AG04449 (cell line): ENCODE measurements at regions of chr7 and their contacts with region 1.

Region 1: DNA sequence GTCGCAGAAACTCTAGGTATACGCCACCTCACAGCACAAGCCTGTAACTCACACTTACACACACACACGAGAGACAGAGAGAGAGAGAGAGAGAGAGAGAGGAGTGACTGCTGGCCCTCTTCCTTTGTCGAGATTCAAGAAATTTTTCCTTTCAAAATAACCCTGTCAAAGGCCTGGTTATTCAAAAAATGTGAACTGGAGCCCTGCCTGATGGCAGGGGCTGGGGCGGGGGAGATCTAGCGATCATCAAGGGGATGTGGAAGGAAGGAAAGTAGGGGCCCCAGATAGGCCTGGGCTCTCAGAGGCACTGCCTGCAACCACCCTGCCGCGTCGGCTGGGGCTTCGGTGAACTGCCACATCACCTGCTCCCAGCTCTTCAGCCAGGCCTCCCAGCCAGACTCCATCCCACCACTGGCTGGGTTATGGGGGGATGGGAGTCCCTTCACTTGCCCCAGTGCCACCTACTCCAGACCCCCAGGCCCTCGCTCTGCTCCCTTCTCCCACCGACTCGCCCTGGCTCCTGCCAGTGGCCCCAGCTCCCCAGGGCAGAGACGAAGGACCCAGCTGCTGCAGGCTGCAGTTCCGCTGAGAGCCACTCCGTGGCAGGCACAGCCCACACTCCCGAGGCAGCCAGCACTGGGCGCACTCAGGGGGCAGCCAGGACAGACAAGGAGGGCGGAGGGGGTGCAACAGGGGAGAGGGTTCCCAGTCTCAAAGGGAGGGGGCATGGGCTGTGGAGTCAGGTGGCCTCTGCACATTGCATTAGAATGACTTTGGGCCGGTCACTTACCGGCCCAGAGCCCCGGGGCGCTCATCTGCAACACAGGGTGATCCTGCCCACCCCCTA is 15.3 kb downstream of the KCNH2 start:
- DNase-seq: no peak
- H3K4me3 ChIP-seq: no peak overlapping the region
- CTCF ChIP-seq: peak; percentile 97

Region 2: GRCh38 chr7:150876817-150877526 is 85.8 kb before region 1 on chr7:
- CTCF ChIA-PET with region 1: no interaction called
- POLR2A ChIA-PET with region 1: no interaction called
- DNase-seq: no peak
- H3K4me3 ChIP-seq: no peak overlapping the region
- CTCF ChIP-seq: peak; percentile 32

Region 3: GRCh38 chr7:150974468-150975391 is 12.0 kb after region 1 on chr7:
- CTCF ChIA-PET with region 1: interaction called, 11 read pairs
- POLR2A ChIA-PET with region 1: no interaction called
- DNase-seq: no peak
- H3K4me3 ChIP-seq: peak overlapping the region; percentile 34
- CTCF ChIP-seq: peak; percentile 17

Region 4: GRCh38 chr7:151315038-151315655 is 352.4 kb after region 1 on chr7:
- CTCF ChIA-PET with region 1: no interaction called
- POLR2A ChIA-PET with region 1: no interaction called
- DNase-seq: no peak
- H3K4me3 ChIP-seq: no peak overlapping the region
- CTCF ChIP-seq: peak; percentile 63